Colonic mucosa (tissue), 4 donors: ENCODE measurements at regions of chr7 and their contacts with region 1.

Region 1: GRCh38 chr7:101137651-101138212 is 10.8 kb downstream of the SERPINE1 start:
- DNase-seq: no peak
- H3K4me3 ChIP-seq: no peak overlapping the region
- H3K27ac ChIP-seq: peak overlapping the region; percentile 23
- H3K4me1 ChIP-seq: peaks cover 5% of the 10 kb centered on the region
- H3K27me3 ChIP-seq: no peaks in the 10 kb centered on the region
- CTCF ChIP-seq: no peak

Region 2: DNA sequence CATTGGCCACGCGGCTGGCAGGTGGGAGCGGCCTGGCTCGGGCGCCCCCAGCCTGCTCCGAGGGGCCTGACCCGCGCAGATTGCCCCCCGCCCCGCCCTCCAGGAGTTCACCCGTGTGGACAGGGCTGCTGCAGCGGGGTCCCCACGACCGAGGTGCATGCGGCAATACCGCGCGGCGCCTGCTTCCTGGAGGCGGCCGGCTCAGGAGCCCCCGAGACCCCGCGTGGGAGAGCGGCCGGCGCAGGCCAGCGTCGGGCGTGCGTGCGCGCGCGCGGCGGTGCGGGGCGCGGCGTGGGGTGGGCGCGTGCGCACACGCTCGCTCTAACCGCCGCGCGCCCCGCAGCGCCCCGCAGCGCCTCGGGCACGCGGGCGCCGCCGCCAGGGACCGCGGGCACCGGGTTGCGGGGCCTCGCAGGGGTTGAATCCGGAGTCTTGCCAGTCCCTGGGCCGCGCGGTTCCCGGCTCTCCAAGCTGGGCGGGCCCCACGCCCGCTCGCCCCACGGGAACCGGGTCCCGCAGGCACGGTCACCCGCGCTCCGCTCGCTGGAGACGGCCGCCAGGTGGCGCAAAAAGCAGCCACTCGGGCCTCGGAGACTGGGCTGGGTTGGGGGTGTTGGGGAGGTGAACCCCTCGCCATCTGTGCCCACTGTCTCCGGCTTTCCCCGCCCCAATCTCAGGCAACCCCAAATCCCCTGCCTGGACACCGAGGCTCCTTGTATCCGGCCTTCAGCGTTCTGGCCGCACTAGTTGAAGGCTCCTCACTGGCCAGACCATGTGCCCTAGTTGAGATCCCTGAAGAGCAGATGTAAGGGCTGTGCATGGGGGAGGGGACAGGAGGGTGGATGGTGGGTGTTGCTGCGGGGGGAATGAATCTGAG is 240.8 kb before region 1 on chr7:
- intact Hi-C with region 1: loop called (anchors 2 kb)
- DNase-seq: peak; percentile 81
- H3K4me3 ChIP-seq: peak overlapping the region; percentile 44
- H3K27ac ChIP-seq: peak overlapping the region; percentile 72
- H3K4me1 ChIP-seq: peaks cover 16% of the 10 kb centered on the region
- H3K27me3 ChIP-seq: peaks cover 21% of the 10 kb centered on the region
- CTCF ChIP-seq: peak; percentile 62

Region 3: DNA sequence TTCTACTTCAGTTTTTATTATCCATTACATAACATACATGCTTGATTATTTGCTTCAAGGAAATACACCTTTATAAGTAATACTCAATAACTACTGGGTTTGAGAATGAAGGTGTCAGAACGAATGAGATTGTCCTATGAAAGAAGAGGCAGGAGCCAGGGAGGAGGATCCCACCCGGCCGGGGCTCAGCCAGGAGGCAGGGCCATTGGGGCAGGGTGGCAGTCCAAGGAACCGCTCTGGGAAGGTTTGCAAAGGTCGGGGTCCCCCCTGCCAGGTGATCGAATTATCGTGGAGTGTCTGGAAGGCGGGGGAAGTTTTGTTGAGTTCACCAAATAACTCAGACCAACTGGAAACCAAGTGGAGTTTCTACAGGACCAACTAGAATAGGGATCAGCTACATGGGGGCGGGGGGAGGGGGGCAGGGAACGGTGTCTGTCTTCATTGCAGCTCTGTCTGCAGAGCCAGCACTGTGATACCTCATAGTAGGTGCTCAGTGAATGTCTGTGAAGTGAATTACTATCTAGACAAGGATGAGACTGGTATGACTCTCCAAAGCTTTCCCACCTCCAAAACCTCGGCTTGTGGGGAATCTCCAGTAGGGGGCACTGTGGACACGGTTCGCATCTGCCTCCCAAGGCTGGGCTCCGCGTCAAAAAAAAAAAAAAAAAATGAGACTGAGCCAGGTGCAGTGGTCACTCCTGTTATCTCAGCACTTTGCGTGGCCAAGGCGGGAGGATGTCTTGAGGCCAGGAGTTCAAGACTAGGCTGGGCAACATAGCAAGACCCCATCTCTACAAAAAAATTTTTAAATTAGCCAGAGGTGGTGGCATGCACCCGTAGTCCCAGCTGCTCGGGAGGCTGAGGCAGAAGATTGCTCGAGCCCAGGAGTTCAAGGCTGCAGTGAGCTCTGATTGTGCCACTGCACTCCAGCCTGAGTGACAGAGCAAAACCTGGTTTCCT is 43.0 kb before region 1 on chr7:
- intact Hi-C with region 1: loop called (anchors 2 kb)
- DNase-seq: peak; percentile 66
- H3K4me3 ChIP-seq: no peak overlapping the region
- H3K27ac ChIP-seq: no peak overlapping the region
- H3K4me1 ChIP-seq: no peaks in the 10 kb centered on the region
- H3K27me3 ChIP-seq: no peaks in the 10 kb centered on the region
- CTCF ChIP-seq: peak; percentile 45